Prostate gland (tissue), 2 donors: ENCODE measurements at regions of chr20 and their contacts with region 1.

Region 1: GRCh38 chr20:58980700-58981627 is at the start of gene NELFCD:
- DNase-seq: peak; percentile 71
- H3K4me3 ChIP-seq: peak within 1 kb of the TSS; percentile 73 to 90
- H3K27ac ChIP-seq: peak within 1 kb of the TSS; percentile 75 to 77
- H3K4me1 ChIP-seq: peaks cover 6% of the 10 kb centered on the region
- H3K27me3 ChIP-seq: no peaks in the 10 kb centered on the region
- CTCF ChIP-seq: no peak
- POLR2A ChIP-seq: peak; percentile 21
- total RNA-seq, gene NELFCD: 55.0 to 85.2 TPM

Region 2: GRCh38 chr20:58890518-58891085 is 90.4 kb before region 1 on chr20:
- intact Hi-C with region 1: loop called (anchors 2 kb)
- DNase-seq: peak; percentile 58
- H3K4me3 ChIP-seq: peak overlapping the region; percentile 69 to 81
- H3K27ac ChIP-seq: peak overlapping the region; percentile 98 to 100
- H3K4me1 ChIP-seq: peaks cover 10% of the 10 kb centered on the region
- H3K27me3 ChIP-seq: no peaks in the 10 kb centered on the region
- CTCF ChIP-seq: no peak
- POLR2A ChIP-seq: peak; percentile 45

Region 3: DNA sequence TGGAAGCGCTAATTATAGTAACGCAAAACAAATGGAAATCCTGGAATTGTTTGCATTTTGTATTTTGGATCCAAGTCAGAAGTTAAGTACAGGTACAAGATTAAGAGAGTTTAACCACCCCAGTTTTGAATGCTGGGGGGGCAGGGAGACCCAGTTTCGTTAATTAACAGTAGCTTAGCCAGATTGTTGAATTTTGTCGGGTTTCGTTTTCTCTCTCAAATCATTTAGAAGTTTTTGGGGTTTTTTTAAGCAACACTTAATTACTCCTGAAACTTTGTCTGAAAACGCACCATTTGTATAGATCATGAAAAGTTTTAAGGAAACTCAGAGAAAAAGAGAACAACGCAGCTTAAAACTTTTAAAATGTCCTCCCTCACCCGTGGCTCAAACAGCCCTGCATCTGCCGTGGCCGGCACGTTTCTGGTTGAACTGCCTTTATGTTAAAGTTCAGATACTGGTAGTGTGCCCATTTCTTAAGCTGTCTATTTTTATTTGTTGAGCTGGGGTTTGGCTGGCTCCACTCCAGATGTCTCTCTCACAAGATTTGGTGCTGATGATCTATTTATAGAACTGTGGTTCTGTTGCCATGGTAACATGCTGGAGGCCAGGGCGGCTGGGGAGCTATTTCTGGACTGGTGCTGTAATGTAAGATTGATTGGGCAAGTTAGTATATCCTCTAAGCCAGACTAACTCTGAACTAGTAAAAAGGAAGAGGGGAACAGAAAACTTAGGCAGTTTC is 73.4 kb before region 1 on chr20:
- intact Hi-C with region 1: loop called (anchors 5 kb)
- DNase-seq: peak; percentile 78
- H3K4me3 ChIP-seq: no peak overlapping the region
- H3K27ac ChIP-seq: peak overlapping the region; percentile 34 to 48
- H3K4me1 ChIP-seq: peaks cover 4% of the 10 kb centered on the region
- H3K27me3 ChIP-seq: no peaks in the 10 kb centered on the region
- CTCF ChIP-seq: no peak
- POLR2A ChIP-seq: peak; percentile 17